ENCODE measurements at regions of chrX and their contacts with region 1.

Region 1: GRCh38 chrX:12771445-12772069 is 19.7 kb upstream of the PRPS2 start:
- DNase-seq: peak; percentile 80
- H3K4me3 Mint-ChIP-seq: no peak overlapping the region
- H3K27ac Mint-ChIP-seq: no peak overlapping the region
- H3K4me1 Mint-ChIP-seq: peaks cover 6% of the 10 kb centered on the region
- H3K27me3 Mint-ChIP-seq: peaks cover 6% of the 10 kb centered on the region

Region 2: DNA sequence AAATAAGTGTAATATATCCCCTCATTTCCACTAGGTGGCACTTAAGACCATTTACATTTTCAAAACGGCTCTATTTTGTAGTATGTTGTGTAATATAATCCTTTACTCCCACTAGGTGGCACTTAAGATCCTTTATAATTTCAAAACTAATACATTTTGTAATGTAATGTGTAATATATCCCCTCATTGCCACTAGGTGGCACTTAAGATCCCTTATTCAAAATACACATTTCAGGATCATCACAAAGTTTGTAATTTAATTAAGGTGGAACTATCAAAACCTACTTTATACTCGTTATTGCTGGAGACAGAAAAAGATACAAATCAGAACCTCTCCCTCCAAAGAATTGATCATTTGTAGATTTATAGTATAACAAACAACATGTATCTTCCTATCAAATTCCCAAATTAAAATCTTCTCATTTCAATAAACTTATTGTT is 1238.3 kb before region 1 on chrX:
- CTCF ChIA-PET with region 1: interaction called, 3 read pairs
- intact Hi-C with region 1: loop called (anchors 1 kb)
- DNase-seq: no peak
- H3K4me3 Mint-ChIP-seq: no peak overlapping the region
- H3K27ac Mint-ChIP-seq: no peak overlapping the region
- H3K4me1 Mint-ChIP-seq: no peaks in the 10 kb centered on the region
- H3K27me3 Mint-ChIP-seq: no peaks in the 10 kb centered on the region

Region 3: GRCh38 chrX:12080265-12080664 is 691.3 kb before region 1 on chrX:
- CTCF ChIA-PET with region 1: no interaction called
- intact Hi-C with region 1: loop called (anchors 5 kb)
- DNase-seq: no peak
- H3K4me3 Mint-ChIP-seq: no peak overlapping the region
- H3K27ac Mint-ChIP-seq: no peak overlapping the region
- H3K4me1 Mint-ChIP-seq: no peaks in the 10 kb centered on the region
- H3K27me3 Mint-ChIP-seq: peaks cover 2% of the 10 kb centered on the region

Region 4: DNA sequence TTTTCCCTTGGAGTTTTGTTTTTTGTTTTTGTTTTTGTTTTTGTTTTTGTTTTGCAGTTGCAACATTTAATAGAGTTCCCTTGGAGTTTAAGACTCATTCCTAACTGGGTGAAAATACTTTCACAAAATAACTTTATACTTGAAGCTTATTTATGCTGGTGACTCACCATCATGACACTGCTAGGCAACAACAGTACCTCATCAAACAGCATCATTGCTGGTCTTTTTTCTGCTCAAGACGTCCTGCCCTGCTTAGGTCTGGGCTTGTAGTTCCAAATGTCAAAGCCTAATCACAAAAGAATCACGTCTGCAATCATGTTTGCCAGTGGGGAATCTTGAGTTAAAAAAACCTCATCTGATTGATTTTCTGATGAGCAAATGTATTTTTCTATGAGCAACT is 86.0 kb before region 1 on chrX:
- CTCF ChIA-PET with region 1: no interaction called
- intact Hi-C with region 1: no loop called
- DNase-seq: no peak
- H3K4me3 Mint-ChIP-seq: no peak overlapping the region
- H3K27ac Mint-ChIP-seq: no peak overlapping the region
- H3K4me1 Mint-ChIP-seq: no peaks in the 10 kb centered on the region
- H3K27me3 Mint-ChIP-seq: no peaks in the 10 kb centered on the region

Region 5: DNA sequence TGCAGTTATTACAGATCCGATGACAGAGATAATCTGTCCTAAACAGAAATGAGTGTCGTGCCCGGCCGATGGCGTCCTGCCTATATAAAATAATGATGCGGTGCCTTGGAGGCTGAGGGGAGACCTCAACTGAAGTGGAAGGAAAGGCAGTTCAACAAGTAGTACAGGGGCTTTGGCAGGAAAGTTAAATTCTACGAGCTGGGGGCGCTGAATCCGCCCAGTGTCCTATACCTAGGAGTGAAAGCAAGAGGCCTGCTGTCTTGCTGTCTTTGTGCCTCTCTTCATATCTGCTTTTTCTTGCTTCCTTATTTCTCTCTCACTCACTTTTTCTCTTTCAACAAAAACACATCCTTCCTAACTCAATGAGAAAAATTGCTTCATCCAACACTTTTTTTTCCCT is 62.5 kb before region 1 on chrX:
- CTCF ChIA-PET with region 1: interaction called, 11 read pairs
- intact Hi-C with region 1: loop called (anchors 1 kb)
- DNase-seq: peak; percentile 56
- H3K4me3 Mint-ChIP-seq: no peak overlapping the region
- H3K27ac Mint-ChIP-seq: no peak overlapping the region
- H3K4me1 Mint-ChIP-seq: no peaks in the 10 kb centered on the region
- H3K27me3 Mint-ChIP-seq: no peaks in the 10 kb centered on the region

Region 6: GRCh38 chrX:12791257-12792228 is 20.0 kb after region 1 on chrX and contains the start of gene PRPS2:
- CTCF ChIA-PET with region 1: interaction called, 18 read pairs
- intact Hi-C with region 1: loop called (anchors 1 kb)
- DNase-seq: peak; percentile 80
- H3K4me3 Mint-ChIP-seq: peak within 1 kb of the TSS; percentile 82
- H3K27ac Mint-ChIP-seq: peak within 1 kb of the TSS; percentile 90
- H3K4me1 Mint-ChIP-seq: peaks cover 35% of the 10 kb centered on the region
- H3K27me3 Mint-ChIP-seq: no peaks in the 10 kb centered on the region
- total RNA-seq, gene PRPS2: 171 to 180 TPM

Region 7: GRCh38 chrX:12901486-12901885 is 129.9 kb after region 1 on chrX:
- CTCF ChIA-PET with region 1: interaction called, 12 read pairs
- intact Hi-C with region 1: loop called (anchors 1 kb)
- DNase-seq: peak; percentile 85
- H3K4me3 Mint-ChIP-seq: no peak overlapping the region
- H3K27ac Mint-ChIP-seq: no peak overlapping the region
- H3K4me1 Mint-ChIP-seq: peaks cover 8% of the 10 kb centered on the region
- H3K27me3 Mint-ChIP-seq: no peaks in the 10 kb centered on the region